ENCODE measurements at regions of chr11 and their contacts with region 1.

Region 1: GRCh38 chr11:64924102-64924851 is at the start of gene PPP2R5B:
- DNase-seq: peak; percentile 92
- ATAC-seq: peak; percentile 94
- H3K4me3 ChIP-seq: peak within 1 kb of the TSS; percentile 58 to 76 (median 69)
- H3K4me3 Mint-ChIP-seq: peak within 1 kb of the TSS; percentile 97
- H3K27ac ChIP-seq: peak within 1 kb of the TSS; percentile 69 to 81
- H3K27ac Mint-ChIP-seq: peak within 1 kb of the TSS; percentile 97
- H3K4me1 ChIP-seq: peaks cover 14 to 33% of the 10 kb centered on the region in 2 donors
- H3K4me1 Mint-ChIP-seq: peaks cover 22% of the 10 kb centered on the region
- H3K27me3 ChIP-seq: no peaks in the 10 kb centered on the region
- H3K27me3 Mint-ChIP-seq: no peaks in the 10 kb centered on the region
- CTCF ChIP-seq: no peak
- total RNA-seq, gene PPP2R5B: 22.6 and 24.2 TPM in 2 replicates

Region 2: GRCh38 chr11:64990222-64990923 is 66.1 kb after region 1 on chr11:
- CTCF ChIA-PET with region 1: no interaction called
- POLR2A ChIA-PET with region 1: no interaction called
- intact Hi-C with region 1: loop called (anchors 2 kb)
- DNase-seq: peak; percentile 65
- ATAC-seq: peak; percentile 61
- H3K4me3 ChIP-seq: peak overlapping the region; percentile 14 to 62 (median 17)
- H3K4me3 Mint-ChIP-seq: peak overlapping the region; percentile 69
- H3K27ac ChIP-seq: peak overlapping the region in 1 of 2 donors; percentile 26
- H3K27ac Mint-ChIP-seq: peak overlapping the region; percentile 77
- H3K4me1 ChIP-seq: peaks cover 38 to 50% of the 10 kb centered on the region in 2 donors
- H3K4me1 Mint-ChIP-seq: peaks cover 45% of the 10 kb centered on the region
- H3K27me3 ChIP-seq: no peaks in the 10 kb centered on the region
- H3K27me3 Mint-ChIP-seq: no peaks in the 10 kb centered on the region
- CTCF ChIP-seq: no peak

Region 3: DNA sequence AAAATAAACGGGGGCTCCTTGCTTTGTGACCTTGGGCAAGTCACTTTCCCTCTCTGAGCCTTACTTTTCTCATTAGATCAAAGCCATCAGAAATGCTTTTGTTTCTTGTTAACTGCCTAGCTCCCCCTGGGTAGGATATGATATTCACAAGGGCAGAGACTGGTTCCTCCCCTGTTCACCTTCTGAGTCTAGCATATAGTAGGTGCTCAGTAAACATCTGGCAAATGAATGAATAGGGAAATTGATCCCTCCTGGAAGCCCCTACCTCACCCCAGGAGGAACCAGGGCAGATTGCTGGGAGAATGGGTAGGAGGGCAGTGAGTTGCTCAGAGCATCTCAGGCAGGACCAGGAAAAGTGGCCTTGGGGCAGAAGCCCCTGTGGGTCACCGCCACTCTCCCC is 110.1 kb after region 1 on chr11:
- CTCF ChIA-PET with region 1: no interaction called
- POLR2A ChIA-PET with region 1: no interaction called
- intact Hi-C with region 1: no loop called
- DNase-seq: no peak
- ATAC-seq: no peak
- H3K4me3 ChIP-seq: no peak overlapping the region
- H3K4me3 Mint-ChIP-seq: no peak overlapping the region
- H3K27ac ChIP-seq: no peak overlapping the region
- H3K27ac Mint-ChIP-seq: no peak overlapping the region
- H3K4me1 ChIP-seq: peaks cover 0 to 5% of the 10 kb centered on the region in 2 donors
- H3K4me1 Mint-ChIP-seq: no peaks in the 10 kb centered on the region
- H3K27me3 ChIP-seq: no peaks in the 10 kb centered on the region
- H3K27me3 Mint-ChIP-seq: no peaks in the 10 kb centered on the region
- CTCF ChIP-seq: no peak

Region 4: GRCh38 chr11:65180877-65181568 is 256.7 kb after region 1 on chr11:
- CTCF ChIA-PET with region 1: no interaction called
- POLR2A ChIA-PET with region 1: no interaction called
- intact Hi-C with region 1: loop called (anchors 1 kb)
- DNase-seq: peak; percentile 87
- ATAC-seq: peak; percentile 84
- H3K4me3 ChIP-seq: peak overlapping the region; percentile 58 to 91 (median 80)
- H3K4me3 Mint-ChIP-seq: peak overlapping the region; percentile 97
- H3K27ac ChIP-seq: peak overlapping the region; percentile 58 to 64
- H3K27ac Mint-ChIP-seq: peak overlapping the region; percentile 96
- H3K4me1 ChIP-seq: peaks cover 16 to 24% of the 10 kb centered on the region in 2 donors
- H3K4me1 Mint-ChIP-seq: peaks cover 24% of the 10 kb centered on the region
- H3K27me3 ChIP-seq: no peaks in the 10 kb centered on the region
- H3K27me3 Mint-ChIP-seq: no peaks in the 10 kb centered on the region
- CTCF ChIP-seq: peak; percentile 61